ENCODE measurements at regions of chr14 and their contacts with region 1.

Region 1: DNA sequence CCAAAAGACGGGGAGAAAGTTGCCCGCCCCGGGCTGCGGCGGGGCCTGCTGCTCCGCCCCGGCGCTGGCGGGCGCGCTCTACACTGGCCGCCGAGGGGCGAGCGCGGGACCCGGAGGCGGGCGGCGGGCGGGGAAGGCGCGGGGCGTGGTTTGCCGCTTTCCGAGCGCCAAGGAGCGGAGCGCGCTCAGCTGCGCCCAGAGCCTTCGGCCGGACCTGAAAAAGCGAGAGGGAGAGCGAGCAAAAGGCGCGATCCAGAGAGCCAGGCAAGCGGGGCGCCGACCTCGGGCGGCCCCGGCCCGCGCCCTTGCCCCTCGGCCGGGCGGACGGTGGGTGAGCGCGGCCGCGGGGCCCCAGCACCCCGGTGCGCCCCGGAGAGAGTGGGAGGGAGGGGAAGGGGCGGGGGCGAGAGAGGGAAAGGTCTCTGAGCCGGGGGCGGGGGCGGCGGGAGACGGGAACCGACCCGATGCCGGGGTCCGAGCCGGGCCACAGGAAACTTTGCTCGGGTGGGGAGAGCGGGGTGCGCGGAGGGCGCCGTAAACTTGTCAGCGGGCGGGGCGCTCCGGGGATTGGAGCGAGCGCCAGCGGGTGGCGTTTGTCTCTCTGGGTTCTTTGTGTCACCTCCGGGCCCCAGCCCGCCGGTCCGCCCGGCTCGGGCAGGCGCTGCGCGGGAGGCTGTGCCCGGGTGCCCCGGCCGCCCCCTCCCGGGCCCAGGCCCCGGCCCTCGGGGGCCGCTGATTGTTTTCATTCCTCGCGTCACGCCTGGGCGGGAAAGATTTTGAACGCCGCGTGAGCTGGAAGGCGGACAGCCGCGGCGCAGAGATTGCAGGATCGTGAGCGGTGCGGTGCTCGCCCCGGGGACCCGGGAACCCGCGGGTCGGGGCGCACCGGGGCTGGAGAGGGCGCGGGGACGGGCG is at the start of gene SYNE2:
- DNase-seq: peak; percentile 78 to 87 (median 82)
- ATAC-seq: peak; percentile 91
- H3K4me3 ChIP-seq: peak within 1 kb of the TSS; percentile 72
- H3K27ac ChIP-seq: peak within 1 kb of the TSS; percentile 70 to 96 (median 92)
- H3K4me1 ChIP-seq: peaks cover 30% of the 10 kb centered on the region
- H3K27me3 ChIP-seq: no peaks in the 10 kb centered on the region
- CTCF ChIP-seq: peak in 4 of 7 experiments; percentile 30 to 78 (median 66)
- POLR2A ChIP-seq: peak in 2 of 3 donors; percentile 39 to 45
- total RNA-seq, gene SYNE2: 163 to 240 TPM

Region 2: DNA sequence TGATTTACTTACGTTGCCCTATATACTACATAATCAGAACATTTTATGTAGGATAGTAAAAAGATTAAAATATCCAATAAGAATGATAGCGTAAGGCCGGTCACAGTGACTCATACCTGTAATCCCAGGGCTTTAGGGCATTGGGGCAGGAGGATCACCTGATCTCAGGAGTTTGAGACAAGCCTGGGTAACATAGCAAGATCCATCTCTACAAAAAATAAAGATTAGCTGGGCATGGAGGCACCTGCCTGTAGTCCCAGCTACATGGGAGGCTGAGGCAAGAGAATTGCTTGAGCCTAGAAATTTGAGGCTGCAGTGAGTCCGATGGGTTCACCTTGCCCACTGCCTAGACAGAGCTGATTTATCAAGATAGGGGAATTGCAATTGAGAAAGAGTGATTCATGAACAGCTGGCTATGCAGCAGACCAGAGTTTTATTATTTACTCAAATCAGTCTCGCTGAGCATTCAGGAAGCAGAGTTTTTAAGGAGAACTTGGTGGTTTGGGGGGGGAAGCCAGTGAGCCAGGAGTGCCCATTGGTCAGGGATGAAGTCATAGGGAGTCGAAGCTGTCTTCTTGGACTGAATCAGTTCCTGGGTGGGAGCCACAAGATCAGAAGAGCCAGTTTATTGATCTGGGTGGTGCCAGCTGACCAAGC is 100.4 kb before region 1 on chr14:
- intact Hi-C with region 1: no loop called
- DNase-seq: peak; percentile 22 to 57 (median 40)
- ATAC-seq: peak; percentile 31
- H3K4me3 ChIP-seq: no peak overlapping the region
- H3K27ac ChIP-seq: peak overlapping the region in 2 of 4 donors; percentile 1 to 46
- H3K4me1 ChIP-seq: peaks cover 16% of the 10 kb centered on the region
- H3K27me3 ChIP-seq: no peaks in the 10 kb centered on the region
- CTCF ChIP-seq: no peak
- POLR2A ChIP-seq: no peak

Region 3: DNA sequence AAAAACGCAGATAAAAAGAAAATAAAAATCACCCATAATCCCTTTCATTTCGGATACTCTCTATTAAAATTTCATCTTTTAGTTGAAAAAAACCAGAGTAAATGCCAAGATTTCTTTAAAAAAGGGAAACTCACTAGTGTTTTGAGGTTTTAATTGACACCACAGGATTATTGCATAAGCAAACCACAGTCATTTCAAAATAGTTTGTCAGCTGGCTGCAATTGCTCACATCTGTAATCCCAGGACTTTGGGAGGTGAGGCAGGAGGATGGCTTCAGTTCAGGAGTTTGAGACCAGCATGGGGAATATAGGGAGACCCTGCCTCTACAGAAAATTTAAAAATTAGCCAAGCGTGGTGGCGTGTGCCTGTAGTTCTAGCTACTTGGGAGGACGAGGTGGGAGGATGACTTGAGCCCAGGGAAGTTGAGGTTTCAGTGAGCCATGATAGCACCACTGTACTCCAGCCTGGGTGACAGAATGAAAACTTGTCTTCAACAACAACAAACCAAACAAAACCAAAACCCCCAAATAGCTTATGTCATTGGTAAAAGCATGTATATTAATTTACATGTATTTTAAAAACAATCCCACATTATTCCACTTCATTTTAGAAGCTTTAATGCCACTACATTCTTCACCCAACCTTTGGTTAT is 48.5 kb after region 1 on chr14:
- intact Hi-C with region 1: loop called (anchors 10 kb)
- DNase-seq: no peak
- ATAC-seq: no peak
- H3K4me3 ChIP-seq: no peak overlapping the region
- H3K27ac ChIP-seq: no peak overlapping the region
- H3K4me1 ChIP-seq: peaks cover 13% of the 10 kb centered on the region
- H3K27me3 ChIP-seq: no peaks in the 10 kb centered on the region
- CTCF ChIP-seq: no peak
- POLR2A ChIP-seq: no peak

Measured in body of pancreas (tissue), 4 donors.